WTC11 (cell line): ENCODE measurements at regions of chr1 and their contacts with region 1.

Region 1: GRCh38 chr1:20696397-20697329 is 21.1 kb downstream of the KIF17 start:
- DNase-seq: peak; percentile 87
- ATAC-seq: peak; percentile 89
- H3K4me3 Mint-ChIP-seq: peak overlapping the region; percentile 79
- H3K27ac Mint-ChIP-seq: peak overlapping the region; percentile 77; the same call in 1 of the 2 replicates
- H3K4me1 Mint-ChIP-seq: peaks cover 11% of the 10 kb centered on the region
- H3K27me3 Mint-ChIP-seq: peaks cover 2% of the 10 kb centered on the region
- CTCF ChIP-seq: peak; percentile 97

Region 2: DNA sequence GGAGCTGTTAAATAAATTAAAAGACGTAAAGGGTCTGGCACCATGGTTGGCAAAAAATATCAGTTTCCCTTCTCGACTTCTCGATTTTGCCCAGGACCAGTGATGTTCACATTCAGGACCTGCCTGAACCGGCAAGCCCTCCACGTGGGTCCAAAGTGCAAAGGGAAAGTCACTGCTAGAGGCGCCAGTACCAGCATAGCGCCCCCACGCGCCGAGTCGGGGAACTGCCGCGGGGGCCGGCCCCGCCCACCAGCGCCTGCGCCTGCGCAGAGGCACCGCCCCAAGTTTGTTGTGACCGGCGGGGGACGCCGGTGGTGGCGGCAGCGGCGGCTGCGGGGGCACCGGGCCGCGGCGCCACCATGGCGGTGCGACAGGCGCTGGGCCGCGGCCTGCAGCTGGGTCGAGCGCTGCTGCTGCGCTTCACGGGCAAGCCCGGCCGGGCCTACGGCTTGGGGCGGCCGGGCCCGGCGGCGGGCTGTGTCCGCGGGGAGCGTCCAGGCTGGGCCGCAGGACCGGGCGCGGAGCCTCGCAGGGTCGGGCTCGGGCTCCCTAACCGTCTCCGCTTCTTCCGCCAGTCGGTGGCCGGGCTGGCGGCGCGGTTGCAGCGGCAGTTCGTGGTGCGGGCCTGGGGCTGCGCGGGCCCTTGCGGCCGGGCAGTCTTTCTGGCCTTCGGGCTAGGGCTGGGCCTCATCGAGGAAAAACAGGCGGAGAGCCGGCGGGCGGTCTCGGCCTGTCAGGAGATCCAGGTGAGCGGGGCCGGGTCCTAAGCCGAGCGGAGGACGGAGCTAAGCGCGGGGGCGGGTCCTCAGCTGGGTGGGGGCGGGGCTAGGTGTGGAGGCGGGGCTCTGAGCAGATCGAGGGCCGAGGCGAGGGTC is 63.2 kb before region 1 on chr1 and contains the start of gene PINK1:
- CTCF ChIA-PET with region 1: interaction called, 23 read pairs
- POLR2A ChIA-PET with region 1: no interaction called
- DNase-seq: peak; percentile 90
- ATAC-seq: peak; percentile 89
- H3K4me3 Mint-ChIP-seq: peak within 1 kb of the TSS; percentile 93
- H3K27ac Mint-ChIP-seq: peak within 1 kb of the TSS; percentile 98
- H3K4me1 Mint-ChIP-seq: peaks cover 13% of the 10 kb centered on the region
- H3K27me3 Mint-ChIP-seq: peaks cover 15% of the 10 kb centered on the region
- CTCF ChIP-seq: peak; percentile 99
- total RNA-seq, gene PINK1: 34.7 to 47.7 TPM (median 35.1 TPM) in 3 replicates

Region 3: GRCh38 chr1:20661207-20662109 is 35.2 kb before region 1 on chr1 and contains the start of gene DDOST:
- CTCF ChIA-PET with region 1: interaction called, 24 read pairs
- POLR2A ChIA-PET with region 1: no interaction called
- DNase-seq: peak; percentile 96
- ATAC-seq: peak; percentile 98
- H3K4me3 Mint-ChIP-seq: peak within 1 kb of the TSS; percentile 99
- H3K27ac Mint-ChIP-seq: peak within 1 kb of the TSS; percentile 98
- H3K4me1 Mint-ChIP-seq: peaks cover 22% of the 10 kb centered on the region
- H3K27me3 Mint-ChIP-seq: no peaks in the 10 kb centered on the region
- CTCF ChIP-seq: no peak
- total RNA-seq, gene DDOST: 299 to 306 TPM (median 300 TPM) in 3 replicates

Region 4: GRCh38 chr1:20717452-20718342 is 21.0 kb after region 1 on chr1 and contains the start of gene KIF17:
- CTCF ChIA-PET with region 1: interaction called, 33 read pairs
- POLR2A ChIA-PET with region 1: interaction called, 12 read pairs
- DNase-seq: peak; percentile 80
- ATAC-seq: peak; percentile 65
- H3K4me3 Mint-ChIP-seq: peak within 1 kb of the TSS; percentile 75
- H3K27ac Mint-ChIP-seq: no peak within 1 kb of the TSS
- H3K4me1 Mint-ChIP-seq: peaks cover 12% of the 10 kb centered on the region
- H3K27me3 Mint-ChIP-seq: peaks cover 41% of the 10 kb centered on the region
- CTCF ChIP-seq: no peak
- total RNA-seq, gene KIF17: 8.1 to 16.1 TPM (median 14.3 TPM) in 3 replicates

Region 5: DNA sequence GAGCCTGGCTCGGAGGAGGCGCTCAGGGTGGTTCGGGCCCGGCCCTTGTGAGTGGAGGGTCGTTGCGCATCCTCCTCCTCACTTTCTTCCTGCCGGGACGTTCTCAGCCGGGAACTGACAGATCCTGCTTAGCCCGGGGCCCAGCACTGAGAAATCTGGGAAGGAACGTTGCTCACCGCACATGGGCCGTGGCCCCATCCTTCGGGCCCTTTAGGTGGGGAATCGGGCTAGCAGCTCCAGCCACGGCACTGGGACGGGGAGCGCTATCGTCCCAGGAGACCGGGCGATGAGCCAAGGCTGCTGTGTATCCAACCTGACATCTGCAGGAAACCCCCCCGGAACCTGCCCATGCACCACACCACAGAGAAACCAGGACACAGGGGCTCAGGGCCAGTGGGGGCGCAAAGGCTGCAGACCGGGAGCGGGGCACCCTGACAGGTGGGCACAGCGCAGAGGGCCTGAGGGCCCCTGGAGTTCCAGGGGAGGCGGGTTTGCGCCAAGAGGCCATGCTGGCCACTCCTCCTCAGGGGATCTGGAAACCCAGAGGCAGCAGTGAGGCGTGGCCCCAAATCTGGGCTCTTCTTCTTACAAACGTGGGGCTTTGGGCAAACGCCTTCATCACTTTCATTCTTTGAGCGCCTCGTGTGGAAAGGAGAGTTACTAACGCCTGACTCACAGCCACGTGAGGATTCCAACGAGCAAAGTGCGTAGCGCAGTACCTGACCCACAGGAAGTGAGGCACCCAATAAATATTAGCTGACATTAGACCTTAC is 36.1 kb after region 1 on chr1 and contains the start of gene SH2D5:
- CTCF ChIA-PET with region 1: interaction called, 124 read pairs
- POLR2A ChIA-PET with region 1: interaction called, 4 read pairs
- DNase-seq: peak; percentile 53
- ATAC-seq: peak; percentile 32
- H3K4me3 Mint-ChIP-seq: peak within 1 kb of the TSS; percentile 87
- H3K27ac Mint-ChIP-seq: no peak within 1 kb of the TSS
- H3K4me1 Mint-ChIP-seq: peaks cover 33% of the 10 kb centered on the region
- H3K27me3 Mint-ChIP-seq: peaks cover 55% of the 10 kb centered on the region
- CTCF ChIP-seq: no peak
- total RNA-seq, gene SH2D5: 13.4 to 17.8 TPM (median 13.8 TPM) in 3 replicates

Region 6: GRCh38 chr1:20786253-20787028 is 89.8 kb after region 1 on chr1:
- CTCF ChIA-PET with region 1: interaction called, 13 read pairs
- POLR2A ChIA-PET with region 1: interaction called, 5 read pairs
- DNase-seq: peak; percentile 96
- ATAC-seq: peak; percentile 88
- H3K4me3 Mint-ChIP-seq: peak overlapping the region; percentile 100
- H3K27ac Mint-ChIP-seq: peak overlapping the region; percentile 98
- H3K4me1 Mint-ChIP-seq: peaks cover 24% of the 10 kb centered on the region
- H3K27me3 Mint-ChIP-seq: no peaks in the 10 kb centered on the region
- CTCF ChIP-seq: no peak

Region 7: GRCh38 chr1:21216835-21217811 is 520.5 kb after region 1 on chr1:
- CTCF ChIA-PET with region 1: interaction called, 12 read pairs
- POLR2A ChIA-PET with region 1: no interaction called
- DNase-seq: peak; percentile 81
- ATAC-seq: peak; percentile 34
- H3K4me3 Mint-ChIP-seq: no peak overlapping the region
- H3K27ac Mint-ChIP-seq: no peak overlapping the region
- H3K4me1 Mint-ChIP-seq: peaks cover 7% of the 10 kb centered on the region; the same call in 1 of the 2 replicates
- H3K27me3 Mint-ChIP-seq: no peaks in the 10 kb centered on the region
- CTCF ChIP-seq: peak; percentile 76